B cell (primary cell): ENCODE measurements at regions of chr21 and their contacts with region 1.

Region 1: GRCh38 chr21:14657241-14658008 is 111.3 kb upstream of the SAMSN1 start:
- DNase-seq: no peak
- ATAC-seq: no peak
- H3K4me3 ChIP-seq: no peak overlapping the region
- H3K4me3 Mint-ChIP-seq: no peak overlapping the region
- H3K27ac ChIP-seq: no peak overlapping the region
- H3K27ac Mint-ChIP-seq: no peak overlapping the region
- H3K4me1 ChIP-seq: no peaks in the 10 kb centered on the region
- H3K4me1 Mint-ChIP-seq: no peaks in the 10 kb centered on the region
- H3K27me3 ChIP-seq: no peaks in the 10 kb centered on the region
- H3K27me3 Mint-ChIP-seq: no peaks in the 10 kb centered on the region
- CTCF ChIP-seq: no peak

Region 2: GRCh38 chr21:14699433-14700416 is 42.3 kb after region 1 on chr21:
- CTCF ChIA-PET with region 1: no interaction called
- POLR2A ChIA-PET with region 1: no interaction called
- intact Hi-C with region 1: loop called (anchors 10 kb)
- DNase-seq: no peak
- ATAC-seq: no peak
- H3K4me3 ChIP-seq: no peak overlapping the region
- H3K4me3 Mint-ChIP-seq: no peak overlapping the region
- H3K27ac ChIP-seq: no peak overlapping the region
- H3K27ac Mint-ChIP-seq: no peak overlapping the region
- H3K4me1 ChIP-seq: no peaks in the 10 kb centered on the region
- H3K4me1 Mint-ChIP-seq: no peaks in the 10 kb centered on the region
- H3K27me3 ChIP-seq: no peaks in the 10 kb centered on the region
- H3K27me3 Mint-ChIP-seq: no peaks in the 10 kb centered on the region
- CTCF ChIP-seq: no peak